HEK293 (cell line): ENCODE measurements at regions of chr10 and their contacts with region 1.

Region 1: GRCh38 chr10:59934701-59935100 is 28.3 kb upstream of the CCDC6 start:
- H3K4me3 ChIP-seq: no peak overlapping the region
- H3K27ac ChIP-seq: no peak overlapping the region
- H3K4me1 ChIP-seq: no peaks in the 10 kb centered on the region
- CTCF ChIP-seq: no peak

Region 2: GRCh38 chr10:59817773-59818172 is 116.9 kb before region 1 on chr10:
- CTCF ChIA-PET with region 1: no interaction called
- POLR2A ChIA-PET with region 1: interaction called, 11 read pairs
- H3K4me3 ChIP-seq: no peak overlapping the region
- H3K27ac ChIP-seq: no peak overlapping the region
- H3K4me1 ChIP-seq: no peaks in the 10 kb centered on the region
- CTCF ChIP-seq: no peak